Left cardiac atrium (tissue), 4 donors: ENCODE measurements at regions of chr18 and their contacts with region 1.

Region 1: DNA sequence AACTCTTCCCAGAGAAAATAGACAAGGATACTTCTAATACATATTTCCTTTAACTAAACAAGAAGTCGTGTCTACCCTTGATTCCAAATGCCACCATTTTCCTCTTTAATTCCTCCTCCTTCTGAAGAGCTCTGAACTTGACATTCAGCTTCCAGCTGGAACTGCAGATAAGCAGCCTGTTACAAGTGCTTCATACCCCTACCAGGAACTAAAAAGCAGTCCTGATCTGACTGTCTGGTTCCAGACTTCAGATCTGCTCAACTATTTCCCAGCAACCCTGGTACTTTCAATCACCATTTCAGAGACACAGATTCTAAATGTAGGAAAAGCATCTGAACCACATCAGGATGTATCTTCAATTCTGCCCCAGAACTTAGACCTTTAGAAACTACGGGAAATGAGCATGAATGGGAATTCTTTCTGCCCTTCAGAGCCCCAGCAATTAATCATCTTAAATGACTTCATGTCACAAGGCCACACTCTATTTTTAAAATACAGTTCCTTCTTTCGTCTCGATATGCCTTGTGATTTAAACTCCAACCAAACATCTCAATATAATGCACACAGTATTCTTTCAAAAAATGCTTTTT is 159.5 kb downstream of the L3MBTL4 start:
- DNase-seq: no peak
- ATAC-seq: peak; percentile 54 to 75

Region 2: DNA sequence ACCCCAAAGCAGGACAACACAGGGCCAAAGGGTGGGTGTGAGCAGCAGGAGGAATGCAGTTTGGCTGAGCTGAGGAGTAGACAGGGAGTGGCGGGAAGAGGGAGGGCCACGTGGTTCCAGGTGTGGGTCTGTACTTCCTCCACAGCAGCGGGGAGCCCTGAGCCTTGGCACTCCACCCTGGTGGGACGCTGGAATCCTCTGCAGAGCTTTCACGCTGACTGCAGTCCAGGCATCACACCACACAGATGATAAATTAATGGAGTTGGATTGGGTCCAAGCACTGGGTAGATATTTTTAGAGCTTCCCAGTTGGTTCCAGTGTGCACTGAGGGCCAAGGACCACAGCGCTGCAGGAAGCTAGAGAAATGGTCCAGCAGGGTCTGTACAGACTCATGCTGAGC is 292.8 kb before region 1 on chr18:
- intact Hi-C with region 1: no loop called
- DNase-seq: no peak
- ATAC-seq: peak; percentile 39 to 57

Region 3: DNA sequence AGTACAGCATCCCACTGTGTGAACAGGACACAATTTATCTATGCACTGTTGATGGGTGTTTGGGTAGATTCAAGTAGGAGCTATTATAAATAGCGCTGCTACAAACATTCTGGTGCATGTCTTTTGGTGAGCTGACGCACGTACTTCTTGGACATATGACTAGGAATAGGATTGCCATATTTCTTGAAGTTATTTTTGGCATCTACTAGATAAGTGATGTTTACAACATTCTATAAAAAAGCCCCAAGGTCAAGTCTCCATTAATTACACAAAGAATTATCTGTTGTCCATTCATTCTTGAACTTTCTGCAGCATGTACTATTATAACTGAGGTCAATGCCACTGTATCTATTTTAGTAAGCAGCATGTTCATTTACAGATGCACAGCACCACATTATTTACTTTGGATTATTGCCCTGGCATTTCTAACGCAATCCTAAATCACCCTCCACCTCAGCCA is 134.4 kb before region 1 on chr18:
- intact Hi-C with region 1: loop called in 1 of 2 experiments (anchors 10 kb)
- DNase-seq: no peak
- ATAC-seq: peak; percentile 76 to 87

Region 4: GRCh38 chr18:6363216-6363615 is 108.0 kb after region 1 on chr18:
- intact Hi-C with region 1: no loop called
- DNase-seq: no peak
- ATAC-seq: no peak

Region 5: DNA sequence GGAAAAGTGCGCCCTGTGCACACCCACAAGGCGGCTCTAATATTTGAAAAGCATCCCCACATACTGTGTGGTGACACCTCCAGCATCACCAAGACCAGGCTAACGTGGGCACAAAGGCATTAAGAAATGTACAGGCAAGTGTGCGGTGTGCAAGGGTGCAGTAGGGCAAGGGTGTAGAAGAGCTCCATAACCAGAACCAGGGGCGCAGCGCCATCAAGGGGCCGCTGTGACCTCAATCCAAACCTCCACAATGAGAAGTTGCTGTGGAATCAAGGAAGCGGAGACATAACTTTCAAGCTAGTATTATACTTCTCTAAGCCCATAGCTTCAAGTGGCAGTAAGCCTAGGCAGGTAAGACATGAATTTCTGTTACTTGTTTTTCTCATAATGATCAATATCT is 146.5 kb after region 1 on chr18:
- intact Hi-C with region 1: loop called in 1 of 2 experiments (anchors 10 kb)
- DNase-seq: no peak
- ATAC-seq: peak; percentile 25 to 41

Region 6: DNA sequence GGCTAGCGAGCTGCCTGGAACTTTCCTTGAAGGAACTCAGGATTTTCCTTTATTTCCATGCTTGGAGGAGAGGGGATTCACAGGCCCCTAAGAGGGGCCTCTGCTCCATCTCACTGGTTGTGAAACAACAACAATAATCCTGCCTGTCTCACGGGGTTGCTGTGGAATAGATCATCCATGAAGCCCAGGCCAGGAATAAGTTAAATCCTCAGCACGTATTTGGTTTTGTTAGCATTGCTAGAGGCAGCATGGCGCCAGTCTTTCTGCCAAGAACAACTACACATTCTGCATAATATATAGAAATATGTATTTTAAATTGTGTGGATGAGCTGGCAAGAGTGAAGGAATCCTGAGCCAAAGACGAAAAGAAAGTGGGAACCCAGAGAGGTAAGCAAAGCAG is 240.3 kb after region 1 on chr18:
- intact Hi-C with region 1: no loop called
- DNase-seq: no peak
- ATAC-seq: no peak